Activated CD4-positive, alpha-beta T cell treated with anti-CD3 and anti-CD28 coated beads for 36 hours (primary cell): ENCODE measurements at regions of chr6 and their contacts with region 1.

Region 1: DNA sequence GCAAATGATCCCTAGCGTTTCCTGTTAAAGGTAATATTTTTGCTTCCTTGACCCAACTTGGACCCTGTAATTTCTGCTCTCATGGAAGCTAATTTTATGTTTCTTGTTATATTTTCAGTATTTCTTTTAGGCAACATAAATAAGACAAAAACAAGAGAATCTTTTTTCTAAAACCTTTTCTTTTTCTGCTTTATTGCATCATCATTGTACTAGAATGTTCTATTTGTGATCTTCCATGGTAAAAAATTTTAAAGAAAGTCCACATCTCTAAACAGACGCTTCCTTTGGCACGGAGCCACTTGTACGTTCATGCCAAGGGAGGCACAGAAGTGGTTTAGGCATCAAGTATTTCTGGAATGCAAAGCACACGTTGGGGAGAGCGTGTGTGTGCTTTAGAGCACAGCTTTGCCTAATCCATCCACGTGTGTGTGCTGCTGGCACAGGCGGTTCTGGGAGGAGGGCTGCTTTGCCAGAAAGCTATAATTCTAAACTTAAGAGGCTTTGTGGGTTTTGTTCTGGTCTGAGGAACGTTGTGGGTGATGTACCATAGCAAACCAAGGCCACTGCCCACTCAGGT is 98.3 kb downstream of the SASH1 start:
- DNase-seq: no peak
- ATAC-seq: no peak
- H3K4me3 Mint-ChIP-seq: no peak overlapping the region
- H3K27ac Mint-ChIP-seq: no peak overlapping the region
- H3K4me1 Mint-ChIP-seq: peaks cover 15% of the 10 kb centered on the region
- H3K27me3 Mint-ChIP-seq: peaks cover 18% of the 10 kb centered on the region

Region 2: GRCh38 chr6:148203970-148204369 is 237.0 kb before region 1 on chr6:
- CTCF ChIA-PET with region 1: no interaction called
- POLR2A ChIA-PET with region 1: no interaction called
- intact Hi-C with region 1: loop called (anchors 1 to 5 kb)
- DNase-seq: peak; percentile 85
- ATAC-seq: peak; percentile 88
- H3K4me3 Mint-ChIP-seq: peak overlapping the region; percentile 66
- H3K27ac Mint-ChIP-seq: peak overlapping the region; percentile 59
- H3K4me1 Mint-ChIP-seq: peaks cover 38% of the 10 kb centered on the region
- H3K27me3 Mint-ChIP-seq: peaks cover 75% of the 10 kb centered on the region